ENCODE measurements at regions of chr10 and their contacts with region 1.

Region 1: GRCh38 chr10:63157845-63158624 is 24.9 kb downstream of the NRBF2 start:
- DNase-seq: peak; percentile 67
- ATAC-seq: peak; percentile 78
- H3K4me3 Mint-ChIP-seq: no peak overlapping the region
- H3K27ac Mint-ChIP-seq: no peak overlapping the region
- H3K4me1 Mint-ChIP-seq: peaks cover 10% of the 10 kb centered on the region
- H3K27me3 Mint-ChIP-seq: no peaks in the 10 kb centered on the region

Region 2: DNA sequence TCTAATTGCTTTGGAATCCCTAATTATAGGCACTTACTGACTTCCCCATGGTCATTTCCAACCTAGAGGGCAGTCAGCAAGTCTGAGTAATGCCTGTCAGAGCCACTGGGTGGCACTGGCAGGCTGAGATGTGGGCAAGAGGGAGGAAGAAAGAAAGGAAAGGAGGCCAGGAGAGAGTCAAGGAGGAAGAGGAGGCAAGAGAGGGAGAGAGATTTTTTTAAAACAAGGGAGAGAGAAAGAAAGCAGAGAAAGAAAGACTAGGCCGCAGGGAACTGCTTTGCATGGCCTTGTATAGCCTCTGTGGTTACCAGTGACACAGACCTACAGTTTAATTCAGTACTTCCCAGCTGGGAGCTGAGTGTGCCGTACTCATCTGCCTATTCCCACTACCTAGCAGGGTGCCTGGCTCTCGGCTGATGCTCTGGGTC is 563.9 kb before region 1 on chr10:
- CTCF ChIA-PET with region 1: interaction called, 37 read pairs
- POLR2A ChIA-PET with region 1: no interaction called
- DNase-seq: peak; percentile 60
- ATAC-seq: peak; percentile 77
- H3K4me3 Mint-ChIP-seq: no peak overlapping the region
- H3K27ac Mint-ChIP-seq: no peak overlapping the region
- H3K4me1 Mint-ChIP-seq: peaks cover 3% of the 10 kb centered on the region
- H3K27me3 Mint-ChIP-seq: peaks cover 6% of the 10 kb centered on the region

Region 3: DNA sequence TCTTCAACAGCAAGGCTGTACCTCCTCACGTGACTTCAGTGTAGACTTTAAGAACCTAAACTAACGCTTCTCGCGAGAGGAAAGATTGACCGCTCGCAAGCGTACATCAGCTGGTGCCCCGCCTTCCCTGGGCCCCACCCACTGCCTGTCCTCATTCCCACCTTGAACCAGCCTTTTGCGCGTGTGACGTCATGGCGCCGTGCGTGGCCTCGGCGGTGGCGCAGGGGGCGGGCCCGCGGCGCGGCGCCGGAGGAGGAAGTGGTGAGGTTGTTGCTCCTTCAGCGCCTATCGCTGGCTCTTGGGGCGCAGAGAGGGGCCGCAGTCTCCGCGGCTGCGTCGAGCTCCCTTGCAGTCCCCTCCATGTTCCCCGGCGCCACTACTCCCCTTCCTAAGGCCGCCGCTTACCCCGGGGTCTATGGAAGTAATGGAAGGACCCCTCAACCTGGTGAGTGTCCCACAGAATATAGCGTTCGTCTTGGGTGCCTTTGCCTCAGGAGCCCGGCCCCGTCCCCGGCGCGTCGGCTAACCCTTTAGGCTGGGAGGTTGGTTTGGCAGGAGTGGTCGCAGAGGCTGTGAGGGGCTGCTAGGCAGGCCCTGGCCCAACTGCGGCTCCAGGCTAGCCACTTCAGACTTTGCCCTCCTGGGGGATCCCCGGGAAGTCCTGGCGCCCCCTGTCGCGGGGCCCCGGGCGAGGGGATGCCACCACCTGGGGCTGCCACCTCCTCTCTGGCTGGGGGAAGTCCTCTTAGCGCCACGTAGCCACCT is 24.8 kb before region 1 on chr10 and contains the start of gene NRBF2:
- CTCF ChIA-PET with region 1: interaction called, 42 read pairs
- POLR2A ChIA-PET with region 1: no interaction called
- DNase-seq: peak; percentile 98
- ATAC-seq: peak; percentile 96
- H3K4me3 Mint-ChIP-seq: peak within 1 kb of the TSS; percentile 91
- H3K27ac Mint-ChIP-seq: peak within 1 kb of the TSS; percentile 97
- H3K4me1 Mint-ChIP-seq: peaks cover 38% of the 10 kb centered on the region
- H3K27me3 Mint-ChIP-seq: no peaks in the 10 kb centered on the region
- total RNA-seq, gene NRBF2: 21.8 to 22.6 TPM

Region 4: GRCh38 chr10:63145782-63146181 is 12.3 kb before region 1 on chr10:
- CTCF ChIA-PET with region 1: interaction called, 71 read pairs
- POLR2A ChIA-PET with region 1: interaction called, 3 read pairs
- DNase-seq: no peak
- ATAC-seq: no peak
- H3K4me3 Mint-ChIP-seq: no peak overlapping the region
- H3K27ac Mint-ChIP-seq: no peak overlapping the region
- H3K4me1 Mint-ChIP-seq: peaks cover 25% of the 10 kb centered on the region
- H3K27me3 Mint-ChIP-seq: no peaks in the 10 kb centered on the region

Region 5: GRCh38 chr10:63173468-63174232 is 15.6 kb after region 1 on chr10:
- CTCF ChIA-PET with region 1: interaction called, 73 read pairs
- POLR2A ChIA-PET with region 1: no interaction called
- DNase-seq: no peak
- ATAC-seq: peak; percentile 95
- H3K4me3 Mint-ChIP-seq: peak overlapping the region; percentile 43
- H3K27ac Mint-ChIP-seq: peak overlapping the region; percentile 88
- H3K4me1 Mint-ChIP-seq: peaks cover 77% of the 10 kb centered on the region
- H3K27me3 Mint-ChIP-seq: no peaks in the 10 kb centered on the region

Measured in activated CD8-positive, alpha-beta T cell treated with anti-CD3 and anti-CD28 coated beads, Interleukin-2, amount 10 ng/mL, durations not matched to agents 7 days and 5 days (primary cell).